Activated naive CD4-positive, alpha-beta T cell treated with anti-CD3 and anti-CD28 coated beads for 36 hours (primary cell): ENCODE measurements at regions of chr20 and their contacts with region 1.

Region 1: GRCh38 chr20:25470045-25470444 is 62.6 kb downstream of the GINS1 start:
- DNase-seq: peak; percentile 76
- H3K4me3 Mint-ChIP-seq: no peak overlapping the region
- H3K27ac Mint-ChIP-seq: no peak overlapping the region
- H3K4me1 Mint-ChIP-seq: peaks cover 6% of the 10 kb centered on the region
- H3K27me3 Mint-ChIP-seq: no peaks in the 10 kb centered on the region

Region 2: GRCh38 chr20:25514747-25515340 is 44.8 kb after region 1 on chr20:
- CTCF ChIA-PET with region 1: no interaction called
- intact Hi-C with region 1: no loop called
- DNase-seq: no peak
- H3K4me3 Mint-ChIP-seq: no peak overlapping the region
- H3K27ac Mint-ChIP-seq: no peak overlapping the region
- H3K4me1 Mint-ChIP-seq: no peaks in the 10 kb centered on the region
- H3K27me3 Mint-ChIP-seq: no peaks in the 10 kb centered on the region

Region 3: GRCh38 chr20:25532119-25532751 is 62.2 kb after region 1 on chr20:
- CTCF ChIA-PET with region 1: no interaction called
- intact Hi-C with region 1: loop called (anchors 5 kb)
- DNase-seq: no peak
- H3K4me3 Mint-ChIP-seq: no peak overlapping the region
- H3K27ac Mint-ChIP-seq: no peak overlapping the region
- H3K4me1 Mint-ChIP-seq: no peaks in the 10 kb centered on the region
- H3K27me3 Mint-ChIP-seq: no peaks in the 10 kb centered on the region